ENCODE measurements at regions of chr17 and their contacts with region 1.

Region 1: DNA sequence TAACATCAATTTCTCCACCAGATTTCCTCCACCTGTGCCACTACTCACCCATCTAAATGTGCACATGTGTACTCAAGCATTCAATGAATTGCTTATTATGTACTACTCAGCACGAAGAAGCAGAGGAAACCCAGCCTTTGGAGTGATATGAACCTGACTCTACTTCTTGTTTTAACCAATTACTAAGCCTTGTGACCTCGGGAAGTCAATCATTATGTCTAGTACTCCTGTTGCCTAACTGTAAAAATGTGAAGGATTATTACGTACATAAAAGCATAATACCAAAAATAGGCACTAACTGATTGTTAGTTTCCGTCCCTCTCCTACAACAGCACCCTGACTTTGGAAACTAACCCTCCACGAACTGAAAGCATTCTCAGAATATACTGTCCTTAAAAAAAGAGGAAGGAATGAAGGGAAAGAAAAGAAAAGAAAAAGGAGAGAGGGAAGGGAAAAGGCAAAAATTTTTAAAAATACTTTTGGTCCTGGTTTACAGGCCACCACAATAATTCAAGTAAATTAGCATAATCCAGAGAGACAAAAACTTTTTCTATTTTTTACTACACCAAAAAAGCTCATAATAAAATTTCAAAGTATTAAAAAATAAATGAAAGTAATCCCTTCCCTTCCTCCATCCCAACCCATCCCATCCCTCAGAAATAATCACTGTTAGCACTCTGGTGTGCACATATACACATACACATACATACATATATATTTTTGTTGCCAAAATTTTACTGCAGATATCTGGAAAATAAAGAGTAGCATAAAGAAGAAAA is 53.6 kb downstream of the KANSL1 start:
- DNase-seq: no peak
- H3K4me3 Mint-ChIP-seq: no peak overlapping the region
- H3K27ac Mint-ChIP-seq: peak overlapping the region; percentile 28
- H3K4me1 Mint-ChIP-seq: peaks cover 63% of the 10 kb centered on the region
- H3K27me3 Mint-ChIP-seq: no peaks in the 10 kb centered on the region
- CTCF ChIP-seq: no peak

Region 2: GRCh38 chr17:46167826-46168569 is 28.4 kb after region 1 on chr17:
- CTCF ChIA-PET with region 1: interaction called, 5 read pairs
- intact Hi-C with region 1: loop called (anchors 2 kb)
- DNase-seq: no peak
- H3K4me3 Mint-ChIP-seq: no peak overlapping the region
- H3K27ac Mint-ChIP-seq: no peak overlapping the region
- H3K4me1 Mint-ChIP-seq: peaks cover 62% of the 10 kb centered on the region
- H3K27me3 Mint-ChIP-seq: no peaks in the 10 kb centered on the region
- CTCF ChIP-seq: no peak